ENCODE measurements at regions of chr15 and their contacts with region 1.

Region 1: DNA sequence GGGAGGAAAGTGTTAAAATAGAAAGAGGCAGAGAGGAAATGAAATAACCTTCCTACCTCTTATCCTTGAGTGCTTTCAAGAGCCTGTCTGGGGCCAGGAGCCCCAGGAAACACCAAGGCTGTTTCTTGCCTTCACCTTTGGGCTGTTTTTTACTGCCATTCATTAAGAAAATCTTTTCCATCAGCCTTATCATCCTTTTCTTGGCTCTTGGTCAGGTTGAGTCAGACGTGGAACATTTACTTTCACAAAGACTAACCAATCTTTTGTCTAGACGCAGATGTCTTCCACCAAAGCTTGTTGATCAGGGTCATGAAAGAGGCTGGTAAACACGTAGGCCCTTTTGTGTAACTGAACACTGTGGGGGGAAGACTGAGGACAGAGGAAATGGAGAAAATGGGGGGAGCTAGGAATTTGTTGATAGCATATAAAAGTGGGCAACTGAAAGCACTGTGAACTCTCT is 151.0 kb upstream of the THBS1 start:
- DNase-seq: no peak
- ATAC-seq: no peak
- H3K4me3 ChIP-seq: no peak overlapping the region
- H3K27ac ChIP-seq: peak overlapping the region in 7 of 10 donors; percentile 41 to 82 (median 58)
- H3K4me1 ChIP-seq: peaks cover 3 to 86% (median 44%) of the 10 kb centered on the region in 9 donors
- H3K27me3 ChIP-seq: no peaks in the 10 kb centered on the region
- CTCF ChIP-seq: no peak

Region 2: DNA sequence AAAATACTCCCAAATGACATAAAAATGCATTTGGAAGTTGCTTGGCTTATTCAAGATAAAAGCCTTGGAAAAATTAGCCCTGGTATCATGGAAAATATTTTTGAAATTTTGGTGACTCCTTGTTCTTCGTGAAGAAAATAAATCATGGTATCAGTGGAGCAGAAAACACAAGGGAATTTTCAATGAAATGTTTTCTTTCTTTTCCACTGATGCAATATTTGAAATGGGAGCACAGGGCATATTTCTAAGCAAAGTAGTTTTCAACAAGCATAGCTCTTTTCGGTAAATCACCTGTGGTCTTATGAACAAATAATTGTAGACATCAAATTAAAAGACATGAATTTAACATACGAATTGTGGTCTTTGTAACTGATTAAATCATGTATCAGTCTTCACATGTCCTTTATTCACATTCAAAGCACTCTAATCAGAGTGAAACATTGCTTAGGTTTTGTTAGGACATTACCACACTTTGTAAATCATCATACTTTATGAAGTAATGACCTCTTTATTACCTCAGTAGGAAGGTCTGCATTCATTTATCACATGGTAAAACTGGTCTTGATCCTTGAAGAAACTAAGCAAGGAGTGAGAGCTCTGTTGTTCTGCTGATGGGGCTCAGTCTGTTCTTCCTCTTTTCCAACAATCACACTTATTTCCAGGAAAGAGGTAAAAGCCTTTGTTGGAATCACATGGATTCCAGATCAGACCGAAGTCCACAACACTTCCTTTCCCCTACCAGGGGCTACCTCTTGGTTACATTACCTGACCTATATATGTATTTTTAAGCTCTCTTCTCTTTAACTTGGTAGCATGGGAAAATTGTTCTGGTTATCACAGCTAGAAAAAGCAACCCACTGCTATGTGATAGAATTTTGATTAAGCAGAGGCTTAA is 262.5 kb before region 1 on chr15:
- intact Hi-C with region 1: no loop called
- DNase-seq: no peak
- ATAC-seq: peak in 4 of 8 donors; percentile 20 to 44 (median 29)
- H3K4me3 ChIP-seq: no peak overlapping the region
- H3K27ac ChIP-seq: peak overlapping the region in 6 of 10 donors; percentile 28 to 71 (median 40)
- H3K4me1 ChIP-seq: peaks cover 0 to 27% (median 7%) of the 10 kb centered on the region in 9 donors
- H3K27me3 ChIP-seq: no peaks in the 10 kb centered on the region
- CTCF ChIP-seq: no peak

Region 3: GRCh38 chr15:39270934-39271333 is 159.0 kb before region 1 on chr15:
- intact Hi-C with region 1: no loop called
- DNase-seq: no peak
- ATAC-seq: no peak
- H3K4me3 ChIP-seq: no peak overlapping the region
- H3K27ac ChIP-seq: peak overlapping the region in 1 of 10 donors; percentile 30
- H3K4me1 ChIP-seq: peaks cover 0 to 18% (median 0%) of the 10 kb centered on the region in 9 donors
- H3K27me3 ChIP-seq: no peaks in the 10 kb centered on the region
- CTCF ChIP-seq: no peak

Region 4: DNA sequence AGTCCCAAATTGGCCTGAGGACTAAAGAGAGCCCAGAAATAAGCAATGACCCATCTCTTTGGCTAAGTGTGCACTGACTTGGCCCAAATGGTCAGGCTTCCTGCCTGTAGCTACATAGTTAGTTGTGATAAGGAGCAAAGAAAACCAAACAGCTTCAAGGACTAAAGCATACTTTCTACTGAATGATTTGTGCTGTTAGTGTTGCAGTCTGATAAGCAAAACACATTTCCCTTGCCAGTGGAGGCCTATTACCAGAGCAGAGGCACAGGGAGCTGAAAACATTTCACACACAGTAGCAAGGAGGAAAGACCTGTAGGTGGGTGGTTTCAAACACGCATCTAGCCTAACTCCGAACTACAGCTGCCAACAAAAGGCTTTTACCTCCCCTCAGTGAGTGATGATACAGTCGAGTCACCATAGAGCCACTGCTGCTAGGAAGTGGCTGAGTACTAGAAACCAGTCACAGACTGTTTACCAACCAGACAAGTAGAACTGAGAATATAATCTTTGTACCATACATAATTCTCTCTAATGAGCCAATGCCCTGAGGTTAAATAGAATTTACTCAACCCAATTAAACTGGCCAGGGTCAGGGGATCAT is 71.4 kb before region 1 on chr15:
- intact Hi-C with region 1: loop called in 1 of 10 experiments (anchors 5 kb)
- DNase-seq: peak in 1 of 2 donors; percentile 54
- ATAC-seq: peak; percentile 83 to 93 (median 90)
- H3K4me3 ChIP-seq: no peak overlapping the region
- H3K27ac ChIP-seq: peak overlapping the region; percentile 49 to 83 (median 73)
- H3K4me1 ChIP-seq: peaks cover 5 to 35% (median 19%) of the 10 kb centered on the region in 9 donors
- H3K27me3 ChIP-seq: no peaks in the 10 kb centered on the region
- CTCF ChIP-seq: no peak

Region 5: DNA sequence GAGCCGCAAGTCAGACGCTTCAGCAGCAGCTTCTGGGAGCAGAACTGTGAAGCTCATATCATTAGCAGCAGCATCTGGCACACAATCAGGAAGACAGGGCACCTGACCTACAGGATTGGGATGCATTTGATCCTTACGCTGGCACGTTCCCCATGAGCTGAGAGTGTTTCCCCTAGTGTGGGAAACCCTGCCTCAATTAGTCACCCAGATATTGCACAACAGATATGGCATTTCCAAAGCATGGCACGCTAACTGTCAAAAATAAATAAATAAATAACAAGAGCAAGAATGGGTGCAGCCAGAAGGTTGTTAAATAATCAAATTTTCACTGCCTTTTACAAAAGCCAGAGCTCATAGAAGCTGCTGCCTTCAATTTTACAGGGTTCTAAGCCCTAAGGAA is 38.7 kb before region 1 on chr15:
- intact Hi-C with region 1: no loop called
- DNase-seq: no peak
- ATAC-seq: peak in 5 of 8 donors; percentile 37 to 91 (median 51)
- H3K4me3 ChIP-seq: no peak overlapping the region
- H3K27ac ChIP-seq: no peak overlapping the region
- H3K4me1 ChIP-seq: peaks cover 0 to 45% (median 0%) of the 10 kb centered on the region in 9 donors
- H3K27me3 ChIP-seq: no peaks in the 10 kb centered on the region
- CTCF ChIP-seq: no peak

Region 6: DNA sequence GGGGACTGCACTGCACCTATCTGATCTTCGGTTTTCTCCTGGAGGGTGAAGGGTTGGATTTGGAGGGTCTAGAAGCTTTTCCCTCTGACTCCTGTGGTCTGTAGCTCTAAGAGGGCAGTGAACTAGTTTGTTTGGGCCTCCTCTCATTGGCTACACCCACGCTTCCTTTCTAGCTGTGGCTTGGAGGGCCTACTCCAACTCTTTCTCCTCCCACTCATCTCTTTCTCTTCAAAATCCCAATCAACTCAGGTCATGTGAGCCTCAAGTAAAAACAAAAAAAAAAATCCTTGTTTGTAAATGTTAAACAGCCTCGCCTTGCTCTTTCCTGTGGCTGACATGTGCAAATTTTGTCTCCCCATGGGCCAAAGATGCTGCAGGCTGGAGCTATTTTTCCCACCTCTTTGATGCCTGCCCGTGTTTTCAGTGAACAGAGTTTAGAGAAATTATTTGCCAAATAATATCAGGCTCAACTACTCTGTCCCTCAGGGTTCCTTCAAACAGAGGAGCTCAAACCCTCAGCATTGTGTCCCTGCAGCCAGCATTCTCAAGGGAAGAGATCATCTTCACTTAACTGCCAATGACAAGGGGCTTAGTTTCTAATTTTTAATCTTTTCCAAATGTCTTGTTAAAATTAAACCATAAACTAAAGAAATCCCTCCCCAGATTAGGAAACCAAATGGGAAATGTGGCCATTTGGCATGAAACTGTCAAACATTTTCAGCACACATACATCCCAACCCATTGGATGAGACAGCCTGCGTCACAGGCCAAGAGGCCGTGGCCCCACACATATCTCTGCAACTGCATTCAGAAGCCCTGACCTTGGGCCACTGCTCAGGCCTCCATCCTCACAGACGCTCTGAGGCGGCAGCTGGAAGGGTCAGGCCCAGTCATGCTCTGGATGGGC is 36.2 kb after region 1 on chr15:
- intact Hi-C with region 1: loop called in 1 of 10 experiments (anchors 2 kb)
- DNase-seq: peak; percentile 76 to 77
- ATAC-seq: peak; percentile 69 to 89 (median 80)
- H3K4me3 ChIP-seq: no peak overlapping the region
- H3K27ac ChIP-seq: peak overlapping the region in 9 of 10 donors; percentile 33 to 86 (median 59)
- H3K4me1 ChIP-seq: peaks cover 4 to 66% (median 42%) of the 10 kb centered on the region in 9 donors
- H3K27me3 ChIP-seq: no peaks in the 10 kb centered on the region
- CTCF ChIP-seq: no peak

Region 7: DNA sequence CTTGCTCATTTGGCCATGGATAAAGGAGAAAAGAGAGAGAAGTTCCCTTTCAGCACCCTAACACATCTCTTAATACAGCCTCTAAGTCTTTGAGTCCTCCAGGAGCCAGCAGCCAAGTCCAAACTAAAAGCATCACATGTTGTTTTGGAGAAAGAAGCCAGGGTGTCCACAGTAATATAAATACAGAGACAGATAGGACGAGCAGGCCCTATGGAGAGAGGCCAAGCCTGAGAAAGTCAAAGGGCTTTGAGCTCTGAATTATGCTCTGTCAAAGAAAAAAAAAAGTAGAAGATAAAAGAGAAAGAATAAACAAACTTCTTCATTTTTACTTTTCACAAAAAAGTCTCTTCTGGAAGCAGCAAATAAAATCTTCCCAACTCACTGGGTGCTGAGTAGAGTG is 58.6 kb after region 1 on chr15:
- intact Hi-C with region 1: loop called in 4 of 10 experiments (anchors 2 to 5 kb)
- DNase-seq: peak in 1 of 2 donors; percentile 50
- ATAC-seq: peak; percentile 32 to 90 (median 73)
- H3K4me3 ChIP-seq: no peak overlapping the region
- H3K27ac ChIP-seq: peak overlapping the region in 9 of 10 donors; percentile 42 to 85 (median 76)
- H3K4me1 ChIP-seq: peaks cover 0 to 66% (median 40%) of the 10 kb centered on the region in 9 donors
- H3K27me3 ChIP-seq: no peaks in the 10 kb centered on the region
- CTCF ChIP-seq: no peak

Region 8: GRCh38 chr15:39770748-39771689 is 341.1 kb after region 1 on chr15:
- intact Hi-C with region 1: no loop called
- DNase-seq: no peak
- ATAC-seq: peak in 7 of 8 donors; percentile 52 to 84 (median 67)
- H3K4me3 ChIP-seq: no peak overlapping the region
- H3K27ac ChIP-seq: peak overlapping the region in 9 of 10 donors; percentile 11 to 71 (median 36)
- H3K4me1 ChIP-seq: peaks cover 0 to 15% (median 0%) of the 10 kb centered on the region in 9 donors
- H3K27me3 ChIP-seq: no peaks in the 10 kb centered on the region
- CTCF ChIP-seq: no peak